Right ventricle myocardium inferior (tissue), 1 donor: ENCODE measurements at regions of chr1 and their contacts with region 1.

Region 1: DNA sequence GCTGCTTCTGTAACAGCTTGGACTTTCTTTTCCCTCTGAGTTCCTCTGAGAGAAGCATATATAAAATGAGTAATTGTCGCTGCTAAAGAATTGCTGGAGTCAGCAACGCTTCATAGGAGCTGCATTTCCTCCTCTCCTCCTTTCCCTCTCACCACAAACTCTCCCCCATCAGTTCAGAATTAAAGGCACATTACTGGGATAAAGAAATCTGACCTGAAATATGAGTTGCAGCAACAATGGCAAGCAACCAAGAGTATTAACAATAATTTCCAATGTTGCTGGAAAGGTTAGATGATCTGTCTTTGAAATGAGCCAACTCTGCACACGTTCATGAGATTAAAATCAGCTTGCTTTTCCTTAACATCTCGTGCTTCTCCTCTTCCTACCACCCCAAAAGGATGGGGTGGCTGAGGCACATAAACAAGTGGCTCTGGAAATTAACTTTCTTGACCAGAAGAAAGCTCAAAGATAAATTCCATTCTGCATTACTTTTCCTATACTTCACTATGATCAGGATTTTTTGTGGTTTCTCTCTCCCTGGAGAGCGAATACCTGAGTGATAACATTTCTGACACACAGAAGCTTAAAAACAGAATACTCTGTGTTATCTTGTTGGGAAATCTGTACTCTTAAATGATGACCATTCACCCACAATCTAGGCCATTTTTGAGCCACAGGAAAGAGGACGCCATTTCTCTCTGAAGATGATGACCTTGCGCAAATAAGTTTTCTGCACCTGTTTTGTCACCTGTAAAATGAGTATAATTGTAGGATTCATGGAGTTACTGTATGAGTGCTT is 90.2 kb downstream of the TGFBR3 start:
- DNase-seq: no peak
- ATAC-seq: no peak

Region 2: DNA sequence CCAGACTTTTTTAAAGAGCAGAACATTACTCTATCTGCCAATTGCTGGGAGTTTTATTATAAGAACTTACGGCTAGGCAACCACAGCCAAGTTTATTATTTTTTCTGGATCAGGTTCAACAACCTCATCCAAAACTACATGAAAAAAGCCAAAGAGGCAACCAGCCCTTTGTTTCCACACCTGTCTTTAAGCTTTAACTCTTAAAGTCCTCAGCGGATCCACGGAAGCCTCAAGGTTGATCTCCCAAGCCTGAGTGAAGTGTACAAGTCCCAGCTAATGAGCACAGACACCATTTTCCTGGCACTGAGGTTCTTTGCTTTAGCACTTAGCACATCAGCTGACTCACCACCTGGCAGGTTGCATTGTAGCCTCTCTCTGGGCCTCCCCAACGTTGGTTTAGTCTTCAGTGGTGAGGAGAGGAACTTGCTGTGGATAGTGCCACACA is 52.9 kb before region 1 on chr1:
- intact Hi-C with region 1: loop called (anchors 5 kb)
- DNase-seq: no peak
- ATAC-seq: peak; percentile 20

Region 3: GRCh38 chr1:91929250-91929649 is 133.5 kb after region 1 on chr1:
- intact Hi-C with region 1: loop called (anchors 5 kb)
- DNase-seq: no peak
- ATAC-seq: peak; percentile 63